ENCODE measurements at regions of chr2 and their contacts with region 1.

Region 1: DNA sequence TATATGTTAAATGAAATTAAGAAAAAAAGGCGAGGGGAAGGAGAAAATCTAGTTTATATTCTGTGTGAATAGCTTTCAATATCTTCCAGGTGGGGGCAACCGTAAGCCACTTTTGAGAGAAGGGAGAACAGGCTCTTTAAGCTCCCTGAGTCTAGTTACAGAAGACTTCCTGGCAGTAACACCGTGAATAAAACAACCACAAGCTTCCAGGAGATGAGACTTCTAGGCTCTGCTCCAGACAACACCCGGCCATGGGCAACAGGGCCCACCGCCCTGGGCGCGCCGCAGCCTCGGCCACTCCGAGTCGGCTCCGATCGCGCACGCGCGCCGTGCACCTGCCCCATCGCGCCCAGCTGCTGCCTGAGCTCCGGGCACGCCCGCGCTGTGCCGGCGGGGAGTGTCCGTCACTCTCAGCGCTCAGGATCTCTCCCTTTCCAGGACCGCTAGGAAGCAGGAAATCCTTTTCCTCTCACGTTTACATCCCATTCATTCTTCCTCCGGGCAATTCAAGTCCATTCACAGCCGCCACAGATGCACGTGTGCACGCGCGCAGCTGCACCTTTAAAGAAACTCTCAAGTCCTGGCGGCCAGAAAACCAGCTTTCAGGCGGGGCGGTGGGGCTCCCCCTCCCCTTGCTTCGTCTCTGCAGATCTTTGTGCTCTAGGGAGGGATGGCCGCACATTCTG is 19.4 kb upstream of the PAX3 start:
- DNase-seq: peak; percentile 80
- H3K4me3 ChIP-seq: peak overlapping the region; percentile 54 to 62 (median 57)
- H3K27ac ChIP-seq: peak overlapping the region in 1 of 4 donors; percentile 71
- H3K4me1 ChIP-seq: peaks cover 16 to 29% (median 27%) of the 10 kb centered on the region in 4 donors
- H3K27me3 ChIP-seq: peaks cover 0 to 81% (median 12%) of the 10 kb centered on the region in 4 donors
- CTCF ChIP-seq: peak; percentile 52 to 59 (median 52)
- EP300 ChIP-seq: no peak
- POLR2A ChIP-seq: no peak

Region 2: DNA sequence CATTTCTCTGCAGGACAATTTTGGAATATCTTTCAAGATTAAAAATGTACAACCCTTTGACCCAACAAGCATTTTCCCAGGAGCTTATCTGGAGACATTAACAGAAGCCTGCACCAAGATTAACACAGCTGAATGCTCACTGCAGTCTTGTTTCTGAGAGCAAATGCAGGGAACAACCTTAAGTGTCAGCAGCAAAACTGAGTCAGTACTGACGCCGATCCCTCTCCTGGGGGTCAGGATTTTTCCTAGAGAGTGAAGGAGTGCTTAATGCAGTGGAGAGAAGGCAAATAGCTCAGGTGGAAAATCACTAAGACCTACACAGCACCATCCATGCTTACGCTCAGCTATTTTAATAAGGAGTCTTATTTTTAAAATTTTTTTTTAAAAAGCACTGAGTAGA is 63.4 kb after region 1 on chr2:
- intact Hi-C with region 1: no loop called
- DNase-seq: no peak
- H3K4me3 ChIP-seq: no peak overlapping the region
- H3K27ac ChIP-seq: no peak overlapping the region
- H3K4me1 ChIP-seq: no peaks in the 10 kb centered on the region
- H3K27me3 ChIP-seq: no peaks in the 10 kb centered on the region
- CTCF ChIP-seq: no peak
- EP300 ChIP-seq: no peak
- POLR2A ChIP-seq: no peak

Region 3: DNA sequence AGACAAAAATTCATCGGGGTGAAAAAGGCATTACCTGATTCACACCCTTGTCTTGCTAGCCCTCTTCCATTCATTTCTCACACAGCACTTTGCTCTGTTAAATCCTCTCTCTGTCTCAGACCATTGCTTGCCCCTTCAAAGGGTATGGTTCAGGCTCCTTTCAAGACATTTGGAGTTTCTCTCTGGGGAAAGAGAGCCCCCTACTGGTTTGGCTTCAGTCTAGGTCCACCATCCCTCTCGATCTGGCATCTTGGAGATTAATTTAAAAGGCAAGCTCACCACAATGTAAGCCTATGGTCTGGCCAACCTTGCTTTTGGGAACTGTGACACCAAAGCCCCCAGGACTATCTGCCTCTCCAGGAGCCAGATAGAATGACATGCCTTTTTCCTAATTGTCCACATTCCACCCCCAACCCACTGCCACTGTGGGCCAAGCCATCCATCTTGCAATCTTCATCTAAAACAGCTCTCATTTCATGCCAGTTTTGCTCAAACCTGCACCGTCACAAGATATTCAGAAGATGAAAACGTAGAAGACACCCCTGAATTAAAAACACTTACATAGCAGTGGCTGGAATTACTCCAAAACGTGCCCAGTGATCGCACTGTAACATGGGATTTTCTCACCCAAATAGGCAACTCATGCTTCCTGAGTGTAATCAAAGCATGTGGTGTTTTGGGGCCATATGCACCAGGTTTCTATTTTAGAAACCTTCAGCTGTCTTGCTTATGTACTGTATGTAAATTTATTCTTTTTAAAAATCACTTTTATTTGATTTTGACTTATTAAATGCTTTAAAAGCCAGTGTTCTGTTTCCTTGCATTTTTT is 243.9 kb after region 1 on chr2:
- intact Hi-C with region 1: loop called (anchors 2 kb)
- DNase-seq: no peak
- H3K4me3 ChIP-seq: no peak overlapping the region
- H3K27ac ChIP-seq: no peak overlapping the region
- H3K4me1 ChIP-seq: no peaks in the 10 kb centered on the region
- H3K27me3 ChIP-seq: no peaks in the 10 kb centered on the region
- CTCF ChIP-seq: peak; percentile 58 to 67 (median 63)
- EP300 ChIP-seq: no peak
- POLR2A ChIP-seq: no peak

Region 4: DNA sequence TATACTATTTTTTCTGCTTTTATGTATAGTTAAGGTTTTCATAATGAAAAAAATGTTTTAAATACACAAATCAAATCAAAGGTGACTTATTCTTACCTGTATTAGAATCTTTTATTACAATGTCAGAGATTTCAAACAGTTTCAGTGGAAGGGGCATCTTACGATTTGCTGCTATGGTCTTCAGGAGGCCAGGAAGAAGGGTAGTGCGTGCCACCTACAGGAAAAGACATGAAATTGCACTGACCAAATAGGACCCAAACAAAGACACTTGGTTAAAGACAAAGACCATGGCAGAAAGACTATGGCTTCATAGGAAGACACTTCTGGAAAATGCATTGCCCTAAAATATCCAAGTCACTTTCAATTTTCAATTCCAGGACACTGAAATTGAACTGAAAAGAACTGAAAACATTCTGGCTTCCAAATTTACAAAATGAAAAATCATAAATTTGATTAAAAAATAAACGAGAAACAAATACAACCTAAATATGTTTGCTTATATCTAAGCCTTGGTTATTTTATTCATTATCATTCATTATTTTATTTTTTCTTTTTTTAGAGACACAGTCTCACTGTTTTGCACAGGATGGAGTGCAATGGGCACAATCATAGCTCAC is 295.7 kb after region 1 on chr2:
- intact Hi-C with region 1: loop called (anchors 2 kb)
- DNase-seq: no peak
- H3K4me3 ChIP-seq: no peak overlapping the region
- H3K27ac ChIP-seq: no peak overlapping the region
- H3K4me1 ChIP-seq: no peaks in the 10 kb centered on the region
- H3K27me3 ChIP-seq: no peaks in the 10 kb centered on the region
- CTCF ChIP-seq: peak; percentile 73 to 82 (median 77)
- EP300 ChIP-seq: no peak
- POLR2A ChIP-seq: no peak